ENCODE measurements at regions of chr1 and their contacts with region 1.

Region 1: DNA sequence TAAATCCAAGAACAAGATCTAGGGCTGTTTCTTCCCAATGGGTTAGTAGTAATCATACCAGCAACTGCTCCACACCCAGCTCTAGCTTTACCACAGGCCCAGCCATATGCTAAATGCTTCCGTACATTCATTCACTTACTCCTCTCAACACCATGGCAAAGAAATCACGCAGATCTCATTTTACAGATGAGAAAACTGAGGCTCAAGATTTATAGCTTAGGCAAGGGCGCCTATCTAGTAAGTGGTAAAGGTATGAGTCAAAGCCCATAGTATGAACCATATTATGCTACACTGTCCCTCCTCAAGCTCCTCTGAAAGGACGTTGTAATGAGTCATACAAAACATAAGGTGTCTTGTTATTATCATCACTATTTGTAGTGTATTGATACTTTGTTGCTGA is 82.2 kb downstream of the NIBAN1 start:
- DNase-seq: peak; percentile 53
- H3K4me3 Mint-ChIP-seq: no peak overlapping the region
- H3K27ac Mint-ChIP-seq: peak overlapping the region; percentile 76
- H3K4me1 Mint-ChIP-seq: peaks cover 58% of the 10 kb centered on the region
- H3K27me3 Mint-ChIP-seq: peaks cover 1% of the 10 kb centered on the region

Region 2: GRCh38 chr1:184805667-184806295 is 86.3 kb before region 1 on chr1:
- CTCF ChIA-PET with region 1: interaction called, 16 read pairs
- POLR2A ChIA-PET with region 1: no interaction called
- intact Hi-C with region 1: loop called (anchors 2 kb)
- DNase-seq: peak; percentile 88
- H3K4me3 Mint-ChIP-seq: no peak overlapping the region
- H3K27ac Mint-ChIP-seq: no peak overlapping the region
- H3K4me1 Mint-ChIP-seq: peaks cover 6% of the 10 kb centered on the region
- H3K27me3 Mint-ChIP-seq: no peaks in the 10 kb centered on the region

Region 3: GRCh38 chr1:184905474-184905894 is 13.4 kb after region 1 on chr1:
- CTCF ChIA-PET with region 1: interaction called, 5 read pairs
- POLR2A ChIA-PET with region 1: interaction called, 6 read pairs
- intact Hi-C with region 1: loop called (anchors 1 kb)
- DNase-seq: no peak
- H3K4me3 Mint-ChIP-seq: no peak overlapping the region
- H3K27ac Mint-ChIP-seq: no peak overlapping the region
- H3K4me1 Mint-ChIP-seq: peaks cover 26% of the 10 kb centered on the region
- H3K27me3 Mint-ChIP-seq: no peaks in the 10 kb centered on the region

Region 4: GRCh38 chr1:184941735-184942134 is 49.6 kb after region 1 on chr1:
- CTCF ChIA-PET with region 1: no interaction called
- POLR2A ChIA-PET with region 1: no interaction called
- intact Hi-C with region 1: loop called (anchors 2 kb)
- DNase-seq: peak; percentile 37
- H3K4me3 Mint-ChIP-seq: no peak overlapping the region
- H3K27ac Mint-ChIP-seq: no peak overlapping the region
- H3K4me1 Mint-ChIP-seq: peaks cover 32% of the 10 kb centered on the region
- H3K27me3 Mint-ChIP-seq: no peaks in the 10 kb centered on the region

Region 5: GRCh38 chr1:184973272-184974055 is 81.3 kb after region 1 on chr1:
- CTCF ChIA-PET with region 1: interaction called, 9 read pairs
- POLR2A ChIA-PET with region 1: interaction called, 46 read pairs
- intact Hi-C with region 1: loop called (anchors 1 kb)
- DNase-seq: peak; percentile 86
- H3K4me3 Mint-ChIP-seq: peak overlapping the region; percentile 94
- H3K27ac Mint-ChIP-seq: peak overlapping the region; percentile 96
- H3K4me1 Mint-ChIP-seq: peaks cover 53% of the 10 kb centered on the region
- H3K27me3 Mint-ChIP-seq: peaks cover 6% of the 10 kb centered on the region

Region 6: DNA sequence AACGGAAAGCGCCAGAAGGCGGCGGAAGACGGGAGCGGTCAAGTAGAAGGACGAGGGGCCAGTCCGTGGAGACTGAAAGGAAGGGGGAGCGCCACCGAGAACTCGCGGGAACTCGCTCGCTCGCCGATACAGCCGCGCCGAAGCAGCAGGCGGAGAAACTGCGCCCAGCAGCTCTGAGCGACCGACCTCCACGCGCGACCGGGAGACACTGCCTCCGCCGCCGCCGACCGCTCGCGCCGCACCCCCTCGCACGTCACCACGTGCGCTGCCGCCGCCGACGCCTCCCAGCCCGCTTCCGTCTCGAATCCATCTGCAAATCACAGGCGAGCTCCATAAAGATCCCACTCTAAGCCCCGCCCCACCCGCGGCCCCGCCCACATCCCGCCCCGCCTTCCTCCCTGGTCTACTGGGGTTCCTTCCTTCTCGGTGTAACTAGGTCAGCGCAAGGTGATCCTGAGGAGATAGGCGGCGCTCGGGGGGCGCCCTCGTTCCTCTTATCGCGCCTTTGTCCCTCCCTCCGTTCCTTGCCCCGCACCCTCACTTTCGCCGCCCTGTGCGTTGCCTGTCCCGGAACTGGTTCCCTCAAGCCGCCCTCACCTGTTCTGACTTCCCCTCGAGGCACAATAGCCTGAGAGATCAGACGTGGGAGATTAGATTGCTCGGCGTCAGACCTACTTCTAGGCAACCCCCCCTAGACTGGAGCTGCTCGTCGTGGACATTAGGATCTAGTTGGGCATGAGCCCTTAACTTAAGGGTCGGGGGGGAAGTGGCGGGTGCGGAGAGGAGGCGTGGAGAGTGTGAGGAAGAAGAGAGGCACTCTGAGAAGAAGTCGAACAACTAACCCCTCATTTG is 425.1 kb after region 1 on chr1 and contains the start of gene IVNS1ABP:
- CTCF ChIA-PET with region 1: no interaction called
- POLR2A ChIA-PET with region 1: no interaction called
- intact Hi-C with region 1: no loop called
- DNase-seq: peak; percentile 98
- H3K4me3 Mint-ChIP-seq: peak within 1 kb of the TSS; percentile 92
- H3K27ac Mint-ChIP-seq: peak within 1 kb of the TSS; percentile 99
- H3K4me1 Mint-ChIP-seq: peaks cover 49% of the 10 kb centered on the region
- H3K27me3 Mint-ChIP-seq: no peaks in the 10 kb centered on the region
- total RNA-seq, gene IVNS1ABP: 133 to 134 TPM

Region 7: DNA sequence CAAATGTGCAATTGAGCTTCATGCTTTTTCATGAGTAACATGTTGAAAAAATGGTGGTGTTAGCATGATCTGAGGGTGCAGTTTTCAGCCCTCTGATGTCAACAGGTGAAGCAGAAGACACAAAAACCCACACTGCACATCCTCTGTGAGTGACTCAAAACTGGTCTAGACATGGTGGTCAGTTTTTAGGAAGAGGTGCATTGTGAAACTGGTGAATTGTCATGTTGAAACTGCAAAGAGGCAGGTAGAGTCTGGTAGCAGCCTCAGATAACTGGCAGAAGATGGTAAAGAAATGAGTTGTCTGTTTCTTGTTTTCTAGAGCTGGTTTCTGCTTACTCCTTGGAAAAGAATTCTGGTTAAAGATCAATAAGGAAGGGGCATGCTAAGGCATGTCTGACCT is 744.7 kb after region 1 on chr1:
- CTCF ChIA-PET with region 1: no interaction called
- POLR2A ChIA-PET with region 1: no interaction called
- intact Hi-C with region 1: loop called (anchors 2 kb)
- DNase-seq: peak; percentile 62
- H3K4me3 Mint-ChIP-seq: no peak overlapping the region
- H3K27ac Mint-ChIP-seq: peak overlapping the region; percentile 83
- H3K4me1 Mint-ChIP-seq: peaks cover 15% of the 10 kb centered on the region
- H3K27me3 Mint-ChIP-seq: peaks cover 3% of the 10 kb centered on the region

Measured in activated CD4-positive, alpha-beta memory T cell treated with anti-CD3 and anti-CD28 coated beads for 36 hours (primary cell).